OCI-LY7 (cell line): ENCODE measurements at regions of chr2 and their contacts with region 1.

Region 1: DNA sequence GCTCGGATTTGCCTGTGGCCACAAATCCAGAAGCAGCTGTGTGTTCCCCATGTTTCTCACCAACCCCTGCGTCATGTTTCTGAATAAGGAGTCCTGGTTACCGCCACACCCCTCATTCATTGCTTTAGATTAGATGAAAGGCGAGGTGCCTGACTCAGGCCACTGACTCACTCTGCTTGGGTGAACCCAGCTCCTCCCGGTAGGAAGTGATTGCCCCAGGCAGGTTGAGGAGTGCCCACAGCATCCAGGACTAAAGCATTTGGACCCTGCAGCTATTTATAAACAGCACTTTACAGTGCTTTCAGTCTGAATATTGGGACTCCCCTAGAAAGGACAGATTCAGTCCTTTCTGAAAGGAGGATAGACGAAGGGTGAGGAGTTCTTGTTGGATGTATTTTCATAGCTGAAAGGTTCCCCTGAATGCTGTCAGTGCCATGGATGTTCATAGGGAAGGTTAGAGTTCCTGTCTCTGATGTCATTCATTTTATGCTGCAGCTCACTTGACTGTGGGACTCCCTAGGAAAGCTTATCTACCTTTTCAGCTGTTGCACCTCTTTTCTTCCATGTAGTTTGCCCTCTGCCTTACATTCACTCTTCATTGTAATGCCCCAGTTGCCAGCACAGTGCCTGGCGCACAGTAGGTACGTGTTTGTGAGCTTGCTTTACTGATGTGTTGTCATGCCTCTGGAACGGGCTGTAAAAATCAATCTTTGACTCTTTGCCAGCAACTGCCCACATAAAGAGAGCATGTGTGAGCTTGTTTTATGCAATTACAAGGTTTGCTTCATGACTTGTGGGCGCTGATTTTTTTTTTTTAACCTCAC is 14.9 kb downstream of the ITGA6 start:
- DNase-seq: no peak
- H3K4me3 ChIP-seq: no peak overlapping the region
- H3K27ac ChIP-seq: no peak overlapping the region
- H3K4me1 ChIP-seq: peaks cover 11% of the 10 kb centered on the region
- CTCF ChIP-seq: no peak

Region 2: DNA sequence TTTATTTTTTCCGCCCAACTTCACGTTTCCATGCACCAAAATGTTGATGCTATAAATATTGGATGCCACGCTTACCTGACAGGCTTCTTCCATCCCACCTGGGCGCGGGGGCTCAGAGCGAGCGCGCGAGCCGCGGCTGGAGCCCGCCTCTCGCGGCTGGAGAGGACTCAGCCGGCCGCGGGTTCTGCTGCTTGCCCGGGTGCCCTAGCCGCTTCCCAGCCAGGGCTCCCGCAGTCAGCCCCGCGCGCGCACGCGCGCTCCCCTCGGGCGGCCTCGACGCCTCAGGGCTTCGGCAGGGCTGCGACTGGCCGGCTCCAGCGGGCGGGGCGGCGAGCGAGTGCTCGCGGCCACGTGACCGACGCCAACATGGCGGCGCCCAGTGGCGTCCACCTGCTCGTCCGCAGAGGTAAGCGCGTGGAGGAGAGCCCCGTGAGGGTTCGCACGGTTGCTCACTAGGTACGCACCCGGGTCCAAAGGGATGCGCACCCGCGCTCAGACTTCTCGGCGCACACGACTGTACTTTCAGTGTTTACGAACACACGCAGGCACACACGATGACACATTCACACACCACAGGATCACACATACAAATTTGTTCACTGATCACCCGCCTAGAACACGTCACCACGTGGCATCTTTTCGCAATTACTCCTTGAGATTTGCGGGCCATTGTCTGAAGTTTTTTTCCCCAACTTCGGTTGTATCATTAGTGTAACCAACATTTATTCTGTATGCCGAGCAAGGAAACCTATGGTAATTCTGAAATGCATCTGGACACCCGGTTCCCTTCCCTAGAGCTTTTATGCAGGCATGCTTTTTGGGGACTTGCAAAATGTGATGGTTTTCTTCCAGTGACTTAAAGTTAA is 442.4 kb before region 1 on chr2 and contains the start of gene METAP1D:
- CTCF ChIA-PET with region 1: interaction called, 10 read pairs
- POLR2A ChIA-PET with region 1: no interaction called
- intact Hi-C with region 1: no loop called
- DNase-seq: peak; percentile 94
- H3K4me3 ChIP-seq: peak within 1 kb of the TSS; percentile 70
- H3K27ac ChIP-seq: peak within 1 kb of the TSS; percentile 7
- H3K4me1 ChIP-seq: peaks cover 18% of the 10 kb centered on the region
- CTCF ChIP-seq: no peak; the same call in 1 of the 2 replicates
- total RNA-seq, gene METAP1D: 4.5 and 11.0 TPM in 2 replicates

Region 3: GRCh38 chr2:172179045-172179701 is 263.1 kb before region 1 on chr2:
- CTCF ChIA-PET with region 1: no interaction called
- POLR2A ChIA-PET with region 1: no interaction called
- intact Hi-C with region 1: no loop called
- DNase-seq: no peak
- H3K4me3 ChIP-seq: no peak overlapping the region
- H3K27ac ChIP-seq: no peak overlapping the region
- H3K4me1 ChIP-seq: no peaks in the 10 kb centered on the region
- CTCF ChIP-seq: no peak

Region 4: GRCh38 chr2:172481507-172482262 is 39.4 kb after region 1 on chr2:
- CTCF ChIA-PET with region 1: no interaction called
- POLR2A ChIA-PET with region 1: interaction called, 11 read pairs
- intact Hi-C with region 1: no loop called
- DNase-seq: no peak
- H3K4me3 ChIP-seq: no peak overlapping the region
- H3K27ac ChIP-seq: no peak overlapping the region
- H3K4me1 ChIP-seq: no peaks in the 10 kb centered on the region
- CTCF ChIP-seq: no peak